ENCODE measurements at regions of chr6 and their contacts with region 1.

Region 1: DNA sequence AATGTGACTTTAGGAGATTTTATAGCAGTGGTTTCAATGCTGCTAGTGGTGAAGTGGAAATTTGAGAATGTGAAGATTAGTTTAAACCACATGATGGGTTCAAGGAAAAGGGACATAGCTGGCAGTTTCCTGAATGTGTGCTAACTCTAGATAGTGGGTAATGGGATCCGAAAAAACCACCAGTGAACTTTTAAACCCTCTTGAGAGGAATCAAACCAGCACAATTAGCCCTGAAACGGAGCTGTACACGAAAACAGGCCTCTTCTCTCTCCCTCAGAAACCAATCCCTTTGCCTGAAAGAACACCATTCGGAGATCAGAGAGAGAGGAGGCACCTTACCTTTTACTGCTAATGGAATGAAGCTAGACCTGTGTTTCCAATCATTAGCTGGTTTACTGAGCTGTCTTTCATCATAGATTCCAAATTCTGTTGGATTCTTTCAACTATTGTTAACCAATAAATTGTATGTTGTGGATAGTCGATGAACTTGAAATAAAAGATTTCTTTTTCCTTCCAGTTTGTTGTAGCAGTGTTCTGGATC is 103.9 kb downstream of the AIG1 start:
- DNase-seq: no peak
- ATAC-seq: no peak
- H3K4me3 ChIP-seq: no peak overlapping the region
- H3K27ac ChIP-seq: no peak overlapping the region
- H3K4me1 ChIP-seq: peaks cover 14% of the 10 kb centered on the region
- H3K27me3 ChIP-seq: no peaks in the 10 kb centered on the region
- CTCF ChIP-seq: no peak

Region 2: DNA sequence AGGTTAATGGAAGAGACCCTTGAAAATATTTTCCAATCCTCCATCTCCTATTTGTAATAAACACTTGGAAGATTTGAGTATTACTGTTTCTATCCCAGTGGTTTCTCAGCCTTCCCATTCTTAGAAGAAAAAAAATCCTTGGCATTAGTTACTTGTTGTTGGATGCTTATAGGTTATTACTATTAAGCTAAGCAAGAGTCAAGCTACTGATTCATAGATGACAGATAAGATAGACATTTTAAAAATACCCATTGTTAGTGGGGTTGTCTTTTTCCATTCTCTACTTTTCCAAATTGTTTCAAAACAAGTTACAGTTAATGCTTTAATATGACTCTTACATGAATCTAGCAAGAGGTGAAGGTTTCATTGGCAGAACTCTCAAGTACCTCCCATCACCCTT is 378.2 kb before region 1 on chr6:
- intact Hi-C with region 1: no loop called
- DNase-seq: no peak
- ATAC-seq: no peak
- H3K4me3 ChIP-seq: no peak overlapping the region
- H3K27ac ChIP-seq: no peak overlapping the region
- H3K4me1 ChIP-seq: peaks cover 6% of the 10 kb centered on the region
- H3K27me3 ChIP-seq: no peaks in the 10 kb centered on the region
- CTCF ChIP-seq: no peak

Region 3: DNA sequence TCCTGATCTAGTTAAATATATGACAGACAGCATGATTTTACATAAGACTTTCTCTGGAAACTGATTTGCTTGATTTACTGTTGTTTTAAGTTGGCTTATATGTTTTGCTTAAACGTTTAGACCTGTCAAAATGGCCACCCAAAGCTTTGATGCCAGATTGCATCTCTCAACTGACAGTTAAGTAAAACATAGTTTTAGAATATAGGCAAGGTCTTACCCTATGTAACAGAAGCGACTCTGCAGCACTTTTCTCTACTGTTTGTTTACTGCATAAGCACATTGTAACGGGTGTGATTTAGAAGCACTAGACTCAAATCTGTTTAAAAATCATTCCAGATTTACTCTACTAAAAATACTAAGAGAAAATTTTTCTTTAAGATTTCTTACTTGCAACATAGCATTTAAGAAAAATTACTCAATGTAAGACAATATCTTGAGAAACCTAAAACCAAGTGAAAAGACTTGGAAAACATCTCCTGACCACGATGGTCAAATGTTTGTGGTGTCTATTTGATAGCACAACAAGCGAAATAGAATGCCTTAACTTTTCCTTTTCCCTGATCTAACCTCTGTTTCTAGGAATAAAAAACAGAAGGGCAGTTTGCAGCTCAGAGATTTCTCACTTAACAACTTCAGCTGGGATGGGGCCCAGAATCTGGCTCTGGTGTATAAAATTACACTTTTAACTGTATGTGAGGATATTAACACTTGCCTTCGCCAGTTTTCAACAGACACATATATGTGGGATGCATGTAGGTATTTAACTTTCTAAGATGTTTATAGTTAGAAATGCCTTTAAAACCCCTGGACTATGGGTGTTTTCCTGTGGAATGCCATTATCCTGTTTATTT is 56.5 kb before region 1 on chr6:
- intact Hi-C with region 1: loop called in 1 of 2 experiments (anchors 10 kb)
- DNase-seq: no peak
- ATAC-seq: no peak
- H3K4me3 ChIP-seq: no peak overlapping the region
- H3K27ac ChIP-seq: peak overlapping the region; percentile 7
- H3K4me1 ChIP-seq: peaks cover 18% of the 10 kb centered on the region
- H3K27me3 ChIP-seq: no peaks in the 10 kb centered on the region
- CTCF ChIP-seq: no peak

Region 4: DNA sequence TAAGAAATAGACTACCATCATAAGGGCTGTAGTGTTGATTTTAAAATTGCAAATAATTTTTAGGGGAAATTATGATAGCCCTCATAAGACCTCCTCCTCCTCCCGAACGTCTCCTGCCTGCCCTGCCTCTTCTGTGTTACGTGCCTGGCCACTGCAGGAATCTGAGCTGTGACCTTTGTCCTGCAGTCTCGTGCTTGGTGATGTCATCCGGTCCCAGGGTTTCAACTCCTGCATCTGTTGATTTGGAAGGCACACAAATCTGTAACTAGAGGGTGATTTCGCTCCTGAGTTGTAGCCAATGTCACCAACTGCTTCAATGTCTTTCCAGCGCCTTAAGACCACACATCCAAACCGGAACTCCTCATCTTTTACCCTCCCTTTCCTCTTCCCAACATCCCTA is 59.3 kb after region 1 on chr6:
- intact Hi-C with region 1: loop called in 1 of 2 experiments (anchors 5 kb)
- DNase-seq: peak; percentile 43 to 49
- ATAC-seq: peak; percentile 68 to 87 (median 81)
- H3K4me3 ChIP-seq: no peak overlapping the region
- H3K27ac ChIP-seq: peak overlapping the region; percentile 59
- H3K4me1 ChIP-seq: peaks cover 25% of the 10 kb centered on the region
- H3K27me3 ChIP-seq: no peaks in the 10 kb centered on the region
- CTCF ChIP-seq: no peak